AG04450 (cell line): ENCODE measurements at regions of chr2 and their contacts with region 1.

Region 1: DNA sequence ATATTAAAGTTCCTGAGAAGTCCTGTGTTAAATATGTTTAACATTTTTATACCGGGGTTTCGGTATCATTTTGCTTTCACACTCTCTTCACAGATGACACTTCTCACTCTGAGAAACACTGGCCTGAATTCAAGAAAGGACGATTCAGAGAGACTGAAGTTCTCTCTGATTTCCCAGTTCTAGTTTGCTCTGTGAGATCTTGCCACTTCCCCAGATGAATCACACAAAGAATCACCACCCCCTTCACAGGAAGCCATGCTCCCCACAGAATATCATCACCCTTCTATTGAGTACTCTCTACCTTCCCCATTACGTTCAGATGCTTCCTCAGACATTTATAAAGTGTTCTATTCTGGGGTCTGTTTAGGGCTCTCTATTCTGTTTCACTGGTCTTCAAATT is 16.1 kb upstream of the CD207 start:
- DNase-seq: no peak
- H3K4me3 ChIP-seq: no peak overlapping the region
- H3K27ac ChIP-seq: no peak overlapping the region
- H3K27me3 ChIP-seq: peaks cover 18% of the 10 kb centered on the region
- CTCF ChIP-seq: no peak

Region 2: DNA sequence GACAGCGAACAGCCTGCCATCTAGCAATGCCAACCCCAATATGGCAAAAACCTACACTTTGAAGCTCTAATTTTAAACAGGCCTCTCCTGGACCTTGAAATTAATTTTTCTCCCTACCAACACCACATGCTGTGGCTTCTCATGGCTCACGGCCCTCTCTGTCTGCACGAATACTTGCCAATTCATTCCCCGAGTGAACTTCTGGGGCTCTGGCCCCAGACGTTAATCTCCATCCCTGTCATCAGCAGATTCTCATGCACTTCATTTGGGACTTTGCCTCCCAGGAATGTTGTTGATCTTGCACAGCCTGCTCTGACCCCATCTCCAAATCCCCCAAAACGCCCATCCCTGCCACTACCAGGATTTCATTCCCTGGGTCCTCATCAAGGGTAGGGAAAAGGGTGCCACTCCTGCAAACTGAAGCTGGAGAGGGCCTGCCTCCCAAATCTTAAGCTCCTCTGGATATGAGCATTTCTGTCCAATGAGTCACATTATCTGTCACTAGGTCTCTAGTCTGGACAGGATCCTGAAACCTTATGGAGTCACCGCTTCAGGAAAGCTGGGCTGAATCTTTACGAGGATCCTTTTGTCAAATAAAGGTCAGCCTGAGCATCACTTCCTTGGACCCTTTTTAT is 71.7 kb before region 1 on chr2:
- CTCF ChIA-PET with region 1: no interaction called
- POLR2A ChIA-PET with region 1: no interaction called
- DNase-seq: no peak
- H3K4me3 ChIP-seq: no peak overlapping the region
- H3K27ac ChIP-seq: no peak overlapping the region
- H3K27me3 ChIP-seq: peaks cover 4% of the 10 kb centered on the region
- CTCF ChIP-seq: no peak

Region 3: GRCh38 chr2:70861777-70862625 is 10.3 kb after region 1 on chr2:
- CTCF ChIA-PET with region 1: interaction called, 15 read pairs
- POLR2A ChIA-PET with region 1: no interaction called
- DNase-seq: peak; percentile 51
- H3K4me3 ChIP-seq: no peak overlapping the region
- H3K27ac ChIP-seq: no peak overlapping the region
- H3K27me3 ChIP-seq: peaks cover 37% of the 10 kb centered on the region
- CTCF ChIP-seq: peak; percentile 100

Region 4: GRCh38 chr2:71100195-71100964 is 248.7 kb after region 1 on chr2:
- CTCF ChIA-PET with region 1: no interaction called
- POLR2A ChIA-PET with region 1: no interaction called
- DNase-seq: peak; percentile 30
- H3K4me3 ChIP-seq: no peak overlapping the region
- H3K27ac ChIP-seq: no peak overlapping the region
- H3K27me3 ChIP-seq: no peaks in the 10 kb centered on the region
- CTCF ChIP-seq: peak; percentile 82